Naive thymus-derived CD4-positive, alpha-beta T cell (primary cell): ENCODE measurements at regions of chr4 and their contacts with region 1.

Region 1: GRCh38 chr4:184168406-184169019 is 49.2 kb downstream of the ENPP6 start:
- DNase-seq: peak in 7 of 9 donors; percentile 15 to 77 (median 33)
- ATAC-seq: peak; percentile 89
- H3K4me3 ChIP-seq: no peak overlapping the region
- H3K4me3 Mint-ChIP-seq: peak overlapping the region in 2 of 10 donors; percentile 37 to 64
- H3K27ac ChIP-seq: no peak overlapping the region
- H3K27ac Mint-ChIP-seq: no peak overlapping the region
- H3K4me1 ChIP-seq: no peaks in the 10 kb centered on the region
- H3K4me1 Mint-ChIP-seq: peaks cover 0 to 20% (median 3%) of the 10 kb centered on the region in 7 donors
- H3K27me3 ChIP-seq: peaks cover 0 to 3% of the 10 kb centered on the region in 2 donors
- H3K27me3 Mint-ChIP-seq: peaks cover 55 to 76% (median 67%) of the 10 kb centered on the region in 5 donors

Region 2: DNA sequence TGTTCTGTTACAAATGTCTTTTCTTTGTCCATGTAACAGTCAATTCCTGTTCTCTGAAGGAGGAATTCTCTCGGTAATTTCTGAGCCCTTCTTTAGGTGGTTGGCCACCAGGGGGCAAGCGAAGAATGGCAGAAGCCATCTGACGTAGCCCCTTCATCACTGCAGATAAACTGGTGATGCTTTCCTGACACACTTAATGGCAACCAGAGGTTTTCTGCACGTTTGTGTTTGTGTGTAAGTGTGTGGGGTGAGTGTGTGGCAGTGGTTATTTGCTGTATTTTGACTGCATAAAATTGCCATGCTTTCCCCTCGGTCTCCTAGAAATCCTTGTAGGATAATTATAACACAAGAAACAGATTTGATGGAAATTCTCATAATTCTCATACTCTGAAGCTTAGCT is 328.2 kb before region 1 on chr4:
- CTCF ChIA-PET with region 1: interaction called, 5 read pairs
- POLR2A ChIA-PET with region 1: no interaction called
- intact Hi-C with region 1: loop called (anchors 1 kb)
- DNase-seq: peak; percentile 27 to 62 (median 57)
- ATAC-seq: peak; percentile 70
- H3K4me3 ChIP-seq: no peak overlapping the region
- H3K4me3 Mint-ChIP-seq: no peak overlapping the region
- H3K27ac ChIP-seq: no peak overlapping the region
- H3K27ac Mint-ChIP-seq: no peak overlapping the region
- H3K4me1 ChIP-seq: no peaks in the 10 kb centered on the region
- H3K4me1 Mint-ChIP-seq: no peaks in the 10 kb centered on the region
- H3K27me3 ChIP-seq: no peaks in the 10 kb centered on the region
- H3K27me3 Mint-ChIP-seq: peaks cover 6 to 26% (median 20%) of the 10 kb centered on the region in 5 donors

Region 3: DNA sequence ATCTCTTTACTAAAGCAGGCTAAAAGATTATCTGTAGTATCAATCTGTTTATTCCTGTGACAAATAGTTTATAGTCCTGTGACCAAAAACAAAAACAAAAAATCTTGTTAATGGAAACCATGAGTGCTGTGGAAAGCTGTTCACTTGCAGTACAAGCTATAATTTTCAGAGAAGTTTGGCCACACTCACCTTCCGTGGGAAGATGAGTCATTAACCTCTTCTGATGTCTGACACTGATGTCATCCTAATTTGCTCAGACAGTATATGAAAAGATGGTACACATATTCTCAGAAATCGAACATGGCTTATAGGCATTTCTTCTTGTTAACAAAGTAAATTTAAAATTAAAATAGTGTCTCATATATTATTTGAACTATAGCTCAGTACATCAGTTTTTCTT is 69.1 kb after region 1 on chr4:
- CTCF ChIA-PET with region 1: no interaction called
- POLR2A ChIA-PET with region 1: no interaction called
- intact Hi-C with region 1: loop called in 1 of 2 experiments (anchors 5 kb)
- DNase-seq: peak in 1 of 9 donors; percentile 31
- ATAC-seq: peak; percentile 45
- H3K4me3 ChIP-seq: no peak overlapping the region
- H3K4me3 Mint-ChIP-seq: peak overlapping the region in 1 of 10 donors; percentile 80
- H3K27ac ChIP-seq: no peak overlapping the region
- H3K27ac Mint-ChIP-seq: peak overlapping the region in 4 of 9 donors; percentile 19 to 93 (median 27)
- H3K4me1 ChIP-seq: no peaks in the 10 kb centered on the region
- H3K4me1 Mint-ChIP-seq: peaks cover 0 to 51% (median 8%) of the 10 kb centered on the region in 7 donors
- H3K27me3 ChIP-seq: no peaks in the 10 kb centered on the region
- H3K27me3 Mint-ChIP-seq: no peaks in the 10 kb centered on the region

Region 4: DNA sequence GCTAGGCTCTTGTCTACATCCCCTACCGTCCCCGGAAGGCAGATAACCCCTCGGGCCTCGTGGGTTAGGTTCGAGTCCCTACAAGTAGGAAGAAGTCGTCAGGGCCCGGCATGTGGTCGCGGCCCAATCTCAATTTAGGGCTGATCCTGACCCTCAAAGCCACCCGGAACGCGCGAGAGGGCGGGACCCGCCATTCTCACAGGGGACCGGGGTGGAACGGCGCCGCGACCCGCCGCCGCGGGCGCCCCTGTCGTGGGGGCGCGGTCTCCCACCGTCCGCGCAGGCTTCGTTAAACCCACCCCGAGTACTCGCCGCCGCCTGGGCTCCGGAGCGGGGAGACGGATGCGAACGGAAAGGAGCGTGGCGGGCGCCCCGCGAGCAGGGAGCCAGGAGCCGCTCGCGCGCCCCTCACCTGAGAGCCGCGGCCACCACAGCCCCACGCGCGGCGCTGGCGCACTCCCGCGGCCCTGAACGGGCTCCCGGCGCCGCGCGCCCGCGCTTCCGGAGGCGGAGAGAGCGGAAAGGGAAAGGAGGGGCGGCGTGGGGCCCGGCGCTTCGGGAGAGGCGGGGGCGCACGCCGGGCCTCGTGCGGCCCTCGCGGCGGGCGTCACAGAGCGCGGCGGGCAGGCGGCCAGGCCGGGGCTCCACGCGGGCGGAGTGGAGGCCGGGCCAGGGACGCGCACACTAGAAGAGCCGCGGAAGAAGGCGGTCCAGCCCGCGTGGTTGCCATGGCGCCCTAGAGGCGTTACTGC is 1035.1 kb after region 1 on chr4 and contains the start of gene CFAP97:
- CTCF ChIA-PET with region 1: no interaction called
- POLR2A ChIA-PET with region 1: no interaction called
- intact Hi-C with region 1: no loop called
- DNase-seq: peak; percentile 78 to 90 (median 85)
- ATAC-seq: peak; percentile 89
- H3K4me3 ChIP-seq: peak within 1 kb of the TSS; percentile 64
- H3K4me3 Mint-ChIP-seq: peak within 1 kb of the TSS; percentile 87 to 99 (median 96)
- H3K27ac ChIP-seq: peak within 1 kb of the TSS; percentile 75
- H3K27ac Mint-ChIP-seq: peak within 1 kb of the TSS; percentile 95 to 99 (median 98)
- H3K4me1 ChIP-seq: peaks cover 22% of the 10 kb centered on the region in 2 donors
- H3K4me1 Mint-ChIP-seq: peaks cover 28 to 60% (median 53%) of the 10 kb centered on the region in 7 donors
- H3K27me3 ChIP-seq: no peaks in the 10 kb centered on the region
- H3K27me3 Mint-ChIP-seq: peaks cover 0 to 3% (median 0%) of the 10 kb centered on the region in 5 donors
- total RNA-seq, gene CFAP97: 23.6 to 46.5 (median 38.0) TPM